Panc1 (cell line): ENCODE measurements at regions of chr18 and their contacts with region 1.

Region 1: DNA sequence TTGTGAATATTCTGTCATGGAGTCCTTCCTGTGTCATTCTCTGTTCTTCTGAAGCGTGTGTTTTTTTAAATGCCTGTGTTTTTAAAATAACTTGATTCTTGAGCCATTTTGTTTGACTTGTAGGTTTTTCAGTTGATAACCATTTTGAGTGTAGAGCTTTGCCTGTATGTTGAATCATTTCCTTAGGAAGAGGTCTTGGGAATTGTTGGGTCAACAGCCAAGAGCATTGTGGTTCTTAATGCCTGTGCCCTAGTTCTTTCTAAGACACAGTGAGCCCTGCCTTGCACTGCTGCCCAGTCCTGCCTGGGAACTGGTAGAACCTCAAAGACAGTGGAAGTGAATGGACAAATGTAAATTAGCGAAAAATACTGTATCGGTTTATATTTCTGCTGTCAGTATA is 25.9 kb downstream of the RAB12 start:
- DNase-seq: no peak
- ATAC-seq: no peak
- H3K4me3 ChIP-seq: no peak overlapping the region
- H3K27ac ChIP-seq: no peak overlapping the region
- H3K4me1 ChIP-seq: no peaks in the 10 kb centered on the region
- H3K27me3 ChIP-seq: no peaks in the 10 kb centered on the region
- CTCF ChIP-seq: no peak

Region 2: GRCh38 chr18:8654503-8655451 is 19.7 kb after region 1 on chr18:
- CTCF ChIA-PET with region 1: no interaction called
- POLR2A ChIA-PET with region 1: interaction called, 13 read pairs
- in situ Hi-C with region 1: no loop called
- intact Hi-C with region 1: no loop called
- DNase-seq: no peak
- ATAC-seq: peak; percentile 59; the same call in 1 of the 2 replicates
- H3K4me3 ChIP-seq: no peak overlapping the region
- H3K27ac ChIP-seq: no peak overlapping the region; the same call in 1 of the 2 replicates
- H3K4me1 ChIP-seq: peaks cover 3% of the 10 kb centered on the region; the same call in 1 of the 2 replicates
- H3K27me3 ChIP-seq: no peaks in the 10 kb centered on the region
- CTCF ChIP-seq: peak; percentile 73; the same call in 1 of the 2 replicates